Heart left ventricle (tissue), 16 donors: ENCODE measurements at regions of chr17 and their contacts with region 1.

Region 1: DNA sequence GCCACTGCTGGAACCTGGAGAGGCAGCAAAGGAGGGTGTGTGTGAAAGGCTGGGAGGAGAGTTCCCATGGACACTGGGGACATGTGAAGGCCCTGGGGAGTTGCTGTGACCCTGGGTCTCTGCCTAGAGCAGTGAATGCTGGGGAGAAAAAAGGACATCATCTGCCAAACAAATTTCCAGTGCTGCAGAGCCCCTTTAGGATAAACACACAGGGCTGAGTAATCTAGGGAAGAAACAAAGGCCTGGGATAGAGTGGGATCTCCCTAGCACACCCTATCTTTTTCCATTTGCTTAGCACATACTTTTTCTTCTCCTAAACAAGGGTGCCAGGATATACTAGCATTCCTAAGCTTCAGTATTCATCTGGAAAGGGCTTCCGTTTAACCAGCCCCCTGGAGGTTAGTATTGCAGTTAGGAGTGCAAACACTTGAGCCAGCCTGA is 3.3 kb upstream of the HIGD1B start:
- DNase-seq: peak; percentile 67 to 81 (median 73)
- ATAC-seq: peak; percentile 55 to 77 (median 60)
- H3K4me3 ChIP-seq: no peak overlapping the region
- H3K27ac ChIP-seq: peak overlapping the region in 7 of 12 donors; percentile 0 to 67 (median 57)
- H3K4me1 ChIP-seq: peaks cover 0 to 21% (median 2%) of the 10 kb centered on the region in 12 donors
- H3K27me3 ChIP-seq: no peaks in the 10 kb centered on the region
- CTCF ChIP-seq: peak in 2 of 12 donors; percentile 10 to 11
- POLR2A ChIP-seq: no peak

Region 2: DNA sequence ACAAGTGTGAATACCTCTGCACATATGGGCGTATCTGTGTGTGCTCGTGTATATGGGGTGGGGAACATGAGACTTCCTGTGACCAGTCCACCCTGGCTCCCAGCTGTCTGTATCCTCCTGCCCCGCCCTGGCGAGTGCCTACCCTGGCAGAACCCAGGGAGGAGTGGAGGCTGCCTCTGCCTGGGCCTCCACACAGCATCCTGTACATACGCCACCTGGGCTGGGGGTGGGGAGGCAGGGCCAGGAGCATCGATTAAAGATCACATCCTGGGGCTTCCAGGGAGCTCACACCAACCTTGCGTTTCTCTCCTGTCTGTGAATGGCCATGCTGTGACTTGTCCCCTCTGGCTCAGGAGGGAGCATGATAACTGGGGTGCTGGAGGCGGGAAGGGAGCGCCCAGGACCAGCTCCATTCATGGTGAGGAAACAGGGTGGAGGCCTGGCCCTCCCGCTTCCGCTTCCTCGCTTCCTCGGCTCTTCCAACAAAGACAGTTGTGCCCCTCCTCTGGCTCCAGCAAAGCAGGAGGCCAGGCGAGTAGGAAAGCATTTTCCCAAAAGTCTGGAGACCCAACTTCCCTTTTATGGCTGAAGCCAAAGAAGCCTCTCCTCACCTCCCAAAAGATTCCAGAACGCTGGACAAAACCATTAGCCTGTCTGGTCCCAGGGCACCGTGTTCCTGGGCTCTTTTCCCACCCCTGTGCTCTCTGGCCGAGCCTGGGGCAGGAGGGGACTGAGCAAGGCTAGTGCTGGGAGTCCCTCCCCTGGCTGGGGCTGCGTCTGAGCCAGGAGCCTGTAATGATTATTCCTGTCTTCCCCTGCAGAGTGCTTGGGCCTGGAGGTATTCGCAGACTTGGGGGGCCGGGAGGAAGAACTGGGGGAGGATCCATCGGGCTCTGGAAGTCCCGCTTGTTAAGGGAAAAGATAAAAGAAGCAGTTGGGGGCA is 62.6 kb before region 1 on chr17:
- intact Hi-C with region 1: loop called in 1 of 10 experiments (anchors 5 kb)
- DNase-seq: peak; percentile 59 to 83 (median 73)
- ATAC-seq: peak; percentile 4 to 53 (median 36)
- H3K4me3 ChIP-seq: peak overlapping the region in 5 of 12 donors; percentile 5 to 25 (median 13)
- H3K27ac ChIP-seq: peak overlapping the region; percentile 51 to 93 (median 80)
- H3K4me1 ChIP-seq: peaks cover 4 to 60% (median 39%) of the 10 kb centered on the region in 12 donors
- H3K27me3 ChIP-seq: no peaks in the 10 kb centered on the region
- CTCF ChIP-seq: no peak
- POLR2A ChIP-seq: peak in 1 of 2 donors; percentile 14

Region 3: GRCh38 chr17:44804302-44805089 is 39.9 kb before region 1 on chr17:
- intact Hi-C with region 1: loop called in 1 of 10 experiments (anchors 5 kb)
- DNase-seq: peak in 4 of 5 donors; percentile 49 to 74 (median 62)
- ATAC-seq: peak; percentile 76 to 90 (median 88)
- H3K4me3 ChIP-seq: no peak overlapping the region
- H3K27ac ChIP-seq: peak overlapping the region; percentile 1 to 88 (median 74)
- H3K4me1 ChIP-seq: peaks cover 0 to 41% (median 18%) of the 10 kb centered on the region in 12 donors
- H3K27me3 ChIP-seq: no peaks in the 10 kb centered on the region
- CTCF ChIP-seq: no peak
- POLR2A ChIP-seq: no peak